Naive thymus-derived CD8-positive, alpha-beta T cell (primary cell): ENCODE measurements at regions of chr19 and their contacts with region 1.

Region 1: GRCh38 chr19:41939861-41940730 is 11.8 kb upstream of the ERFL start:
- DNase-seq: peak in 2 of 10 donors; percentile 34 to 37
- ATAC-seq: peak; percentile 16 to 24
- H3K4me3 Mint-ChIP-seq: peak overlapping the region; percentile 84 to 95 (median 90)
- H3K27ac Mint-ChIP-seq: peak overlapping the region; percentile 78 to 98 (median 93)
- H3K4me1 Mint-ChIP-seq: peaks cover 33 to 65% (median 51%) of the 10 kb centered on the region in 4 donors
- H3K27me3 Mint-ChIP-seq: peaks cover 0 to 4% (median 0%) of the 10 kb centered on the region in 5 donors

Region 2: DNA sequence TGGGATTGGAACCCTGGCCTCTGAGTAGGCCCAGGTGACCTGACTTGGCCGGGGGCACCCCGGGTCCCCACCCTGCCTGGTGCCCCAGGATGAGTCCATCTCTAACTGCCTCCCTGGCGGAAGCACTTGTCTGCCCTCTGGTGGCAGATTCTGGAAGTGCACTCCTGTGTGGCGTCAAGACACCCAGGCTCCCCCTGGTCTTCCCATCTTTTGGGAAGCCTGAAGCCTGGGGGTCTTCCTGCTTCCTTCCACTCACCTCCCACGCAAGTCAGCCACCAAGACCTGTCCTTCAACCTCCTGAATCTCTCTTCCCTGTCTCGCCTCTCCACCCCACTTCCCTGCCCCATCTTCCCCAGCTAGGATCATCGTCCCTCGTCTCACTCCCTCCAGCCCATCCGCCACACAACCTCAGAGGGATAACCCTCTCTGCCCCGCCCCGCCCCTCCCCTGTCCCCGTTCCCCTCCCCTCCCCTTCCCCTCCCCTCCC is 11.6 kb after region 1 on chr19:
- POLR2A ChIA-PET with region 1: interaction called, 11 read pairs
- DNase-seq: peak; percentile 69 to 93 (median 84)
- ATAC-seq: peak; percentile 86 to 88
- H3K4me3 Mint-ChIP-seq: peak overlapping the region in 4 of 10 donors; percentile 22 to 66 (median 43)
- H3K27ac Mint-ChIP-seq: peak overlapping the region; percentile 57 to 97 (median 86)
- H3K4me1 Mint-ChIP-seq: peaks cover 17 to 35% (median 26%) of the 10 kb centered on the region in 4 donors
- H3K27me3 Mint-ChIP-seq: no peaks in the 10 kb centered on the region

Region 3: GRCh38 chr19:41967054-41967783 is 27.1 kb after region 1 on chr19:
- POLR2A ChIA-PET with region 1: no interaction called
- DNase-seq: no peak
- ATAC-seq: no peak
- H3K4me3 Mint-ChIP-seq: no peak overlapping the region
- H3K27ac Mint-ChIP-seq: no peak overlapping the region
- H3K4me1 Mint-ChIP-seq: peaks cover 0 to 5% (median 3%) of the 10 kb centered on the region in 4 donors
- H3K27me3 Mint-ChIP-seq: no peaks in the 10 kb centered on the region

Region 4: GRCh38 chr19:41978470-41978869 is 38.4 kb after region 1 on chr19:
- POLR2A ChIA-PET with region 1: no interaction called
- DNase-seq: no peak
- ATAC-seq: no peak
- H3K4me3 Mint-ChIP-seq: no peak overlapping the region
- H3K27ac Mint-ChIP-seq: no peak overlapping the region
- H3K4me1 Mint-ChIP-seq: no peaks in the 10 kb centered on the region
- H3K27me3 Mint-ChIP-seq: no peaks in the 10 kb centered on the region